AG04450 (cell line): ENCODE measurements at regions of chr15 and their contacts with region 1.

Region 1: GRCh38 chr15:39171944-39172368 is 408.9 kb upstream of the THBS1 start:
- DNase-seq: peak; percentile 96
- H3K4me3 ChIP-seq: no peak overlapping the region
- H3K27ac ChIP-seq: peak overlapping the region; percentile 94
- H3K27me3 ChIP-seq: no peaks in the 10 kb centered on the region
- CTCF ChIP-seq: peak; percentile 66

Region 2: DNA sequence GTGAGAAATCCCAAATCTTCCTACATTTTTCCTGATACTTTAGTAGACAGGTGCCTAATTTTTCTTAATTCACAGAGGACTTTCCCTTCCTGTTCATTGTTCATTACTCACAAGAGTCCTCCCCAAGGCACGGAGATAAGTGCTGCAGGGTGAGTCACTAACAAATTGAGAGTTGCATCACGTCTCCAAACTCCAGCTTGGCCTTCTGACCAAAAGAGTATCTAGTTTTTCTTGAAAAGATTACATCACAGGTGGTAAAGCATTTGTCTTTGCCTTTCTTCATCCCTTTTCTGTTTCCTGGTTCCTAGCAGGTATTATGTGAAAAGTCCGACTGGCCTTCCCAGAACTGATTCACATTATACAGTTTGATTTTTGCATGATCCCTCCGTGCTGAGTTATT is 582.5 kb before region 1 on chr15:
- CTCF ChIA-PET with region 1: no interaction called
- POLR2A ChIA-PET with region 1: no interaction called
- DNase-seq: peak; percentile 43
- H3K4me3 ChIP-seq: no peak overlapping the region
- H3K27ac ChIP-seq: no peak overlapping the region
- H3K27me3 ChIP-seq: peaks cover 30% of the 10 kb centered on the region
- CTCF ChIP-seq: no peak

Region 3: DNA sequence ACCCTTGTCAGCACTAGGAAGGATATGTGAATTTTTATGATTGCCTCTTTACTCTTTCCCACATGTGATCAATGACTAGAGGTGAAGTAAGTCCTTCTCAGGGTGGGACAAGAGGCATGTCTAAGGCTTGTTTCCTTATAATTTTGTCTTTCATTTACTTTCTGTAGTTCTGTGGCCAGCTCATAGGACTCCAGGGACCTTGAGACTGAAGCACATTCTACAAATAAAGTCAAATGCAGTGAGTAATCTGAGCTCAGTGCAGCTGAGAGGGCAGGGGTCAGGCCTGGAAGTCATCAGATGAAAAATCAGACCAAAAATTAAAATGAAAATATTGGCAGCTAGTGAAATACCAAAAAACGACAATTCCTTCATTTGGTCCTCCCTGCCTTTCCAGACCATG is 15.8 kb before region 1 on chr15:
- CTCF ChIA-PET with region 1: no interaction called
- POLR2A ChIA-PET with region 1: no interaction called
- DNase-seq: no peak
- H3K4me3 ChIP-seq: no peak overlapping the region
- H3K27ac ChIP-seq: no peak overlapping the region
- H3K27me3 ChIP-seq: no peaks in the 10 kb centered on the region
- CTCF ChIP-seq: no peak

Region 4: DNA sequence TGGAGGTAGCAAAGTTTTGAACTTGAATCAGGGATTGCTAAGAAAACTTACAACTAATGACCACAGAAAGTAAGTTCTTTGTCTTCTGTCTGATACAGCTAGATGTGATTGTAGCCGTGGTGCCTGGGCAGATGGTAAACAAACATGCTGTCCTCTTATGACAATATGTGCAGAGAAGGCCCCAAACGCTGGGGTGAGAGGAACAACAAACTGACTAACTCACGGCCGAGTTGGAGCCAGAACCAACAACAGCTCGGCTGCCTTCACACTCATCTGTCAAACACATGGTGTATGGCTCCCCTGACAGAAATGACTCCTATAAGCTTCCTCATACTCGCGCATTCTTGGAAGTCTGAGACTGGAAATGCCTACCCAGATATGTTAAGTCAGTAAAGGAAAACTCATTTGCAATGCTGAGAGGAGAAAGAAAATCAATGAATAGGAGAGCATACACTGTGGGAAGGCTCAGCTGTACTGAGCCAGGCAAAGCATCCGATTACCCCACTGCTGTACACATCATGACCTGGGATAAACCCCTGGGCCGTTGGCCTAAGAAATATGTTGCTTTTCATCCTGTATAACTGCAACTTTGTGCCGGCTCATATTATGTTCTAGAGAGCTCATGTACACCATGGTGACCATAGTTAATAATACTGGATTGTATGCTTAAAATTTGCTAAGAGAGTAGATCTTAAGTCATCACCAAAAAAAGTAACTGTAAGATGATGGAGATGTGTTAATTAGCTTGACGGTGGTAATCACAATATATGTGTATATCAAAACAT is 414.6 kb after region 1 on chr15:
- CTCF ChIA-PET with region 1: interaction called, 4 read pairs
- POLR2A ChIA-PET with region 1: interaction called, 44 read pairs
- DNase-seq: no peak
- H3K4me3 ChIP-seq: peak overlapping the region; percentile 99
- H3K27ac ChIP-seq: peak overlapping the region; percentile 12
- H3K27me3 ChIP-seq: no peaks in the 10 kb centered on the region
- CTCF ChIP-seq: no peak